ENCODE measurements at regions of chr16 and their contacts with region 1.

Region 1: DNA sequence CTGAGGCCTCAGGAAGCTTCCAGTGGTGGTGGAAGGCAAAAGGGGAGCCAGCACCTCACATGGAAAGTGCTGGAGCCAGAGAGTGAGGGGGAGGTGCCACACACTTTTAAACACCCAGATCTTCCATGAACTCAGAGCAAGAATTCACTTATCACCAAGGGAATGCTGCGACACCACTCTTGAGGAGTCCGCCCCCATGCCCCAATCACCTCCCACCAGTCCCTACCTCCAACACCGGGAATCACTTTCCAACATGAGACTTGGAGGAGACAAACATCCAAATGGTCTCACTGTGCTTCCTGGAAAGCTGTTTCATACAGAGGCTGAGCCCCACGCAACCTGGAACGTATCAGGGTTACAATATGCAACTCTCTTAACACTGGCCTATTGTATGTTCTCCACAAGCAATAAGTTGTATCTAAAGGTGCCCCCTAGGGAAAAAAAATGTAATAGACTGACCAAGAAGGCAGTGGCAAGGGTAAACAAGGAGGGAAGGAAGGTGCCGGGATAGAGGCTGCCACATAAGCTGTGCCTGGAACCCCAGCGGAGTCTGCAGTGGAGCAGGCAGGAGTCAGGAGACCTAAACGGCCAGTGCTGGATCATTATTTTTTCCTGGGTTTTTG is 106.7 kb upstream of the FOXF1 start:
- DNase-seq: no peak

Region 2: GRCh38 chr16:85195900-85196772 is 1207.5 kb before region 1 on chr16:
- intact Hi-C with region 1: loop called in 1 of 2 experiments (anchors 5 kb)
- DNase-seq: peak; percentile 81

Region 3: GRCh38 chr16:85844786-85845185 is 558.9 kb before region 1 on chr16:
- intact Hi-C with region 1: loop called in 1 of 2 experiments (anchors 5 kb)
- DNase-seq: no peak

Region 4: GRCh38 chr16:86297866-86298757 is 105.5 kb before region 1 on chr16:
- intact Hi-C with region 1: no loop called
- DNase-seq: no peak

Measured in posterior vena cava (tissue), 2 donors.